PC-3 (cell line): ENCODE measurements at regions of chr15 and their contacts with region 1.

Region 1: GRCh38 chr15:51536965-51537574 is 85.5 kb downstream of the DMXL2 start:
- DNase-seq: peak; percentile 33
- ATAC-seq: no peak
- H3K4me3 ChIP-seq: no peak overlapping the region
- H3K27ac ChIP-seq: no peak overlapping the region
- H3K4me1 ChIP-seq: peaks cover 13% of the 10 kb centered on the region; the same call in 1 of the 2 replicates
- H3K27me3 ChIP-seq: no peaks in the 10 kb centered on the region
- CTCF ChIP-seq: peak; percentile 77

Region 2: GRCh38 chr15:51622604-51623370 is 85.7 kb after region 1 on chr15 and contains the start of gene DMXL2:
- CTCF ChIA-PET with region 1: no interaction called
- POLR2A ChIA-PET with region 1: no interaction called
- intact Hi-C with region 1: loop called (anchors 1 kb)
- DNase-seq: peak; percentile 81
- ATAC-seq: peak; percentile 72
- H3K4me3 ChIP-seq: peak within 1 kb of the TSS; percentile 86
- H3K27ac ChIP-seq: peak within 1 kb of the TSS; percentile 10
- H3K4me1 ChIP-seq: peaks cover 14% of the 10 kb centered on the region
- H3K27me3 ChIP-seq: no peaks in the 10 kb centered on the region
- CTCF ChIP-seq: no peak
- total RNA-seq, gene DMXL2: 10.9 and 11.1 TPM in 2 replicates